K562 (cell line): ENCODE measurements at regions of chr14 and their contacts with region 1.

Region 1: GRCh38 chr14:55270832-55271565 is at the start of gene FBXO34:
- DNase-seq: peak; percentile 89 to 98 (median 90)
- ATAC-seq: peak; percentile 89
- H3K4me3 ChIP-seq: peak within 1 kb of the TSS; percentile 76
- H3K27ac ChIP-seq: peak within 1 kb of the TSS; percentile 96
- H3K4me1 ChIP-seq: peaks cover 8 to 16% of the 10 kb centered on the region in 2 experiments
- H3K27me3 ChIP-seq: no peaks in the 10 kb centered on the region
- CTCF ChIP-seq: peak; percentile 96 to 100 (median 99)
- EP300 ChIP-seq: peak; percentile 77
- POLR2A ChIP-seq: no peak; the same call in 1 of the 2 replicates
- RAD21 ChIP-seq: peak; percentile 78 to 81
- polyA plus RNA-seq, gene FBXO34: 6.3 to 10.8 TPM

Region 2: GRCh38 chr14:55333711-55334485 is 62.9 kb after region 1 on chr14:
- CTCF ChIA-PET with region 1: no interaction called
- POLR2A ChIA-PET with region 1: interaction called, 4 read pairs
- in situ Hi-C with region 1: no loop called
- intact Hi-C with region 1: loop called (anchors 2 kb)
- DNase-seq: no peak
- ATAC-seq: no peak
- H3K4me3 ChIP-seq: no peak overlapping the region
- H3K27ac ChIP-seq: no peak overlapping the region
- H3K4me1 ChIP-seq: peaks cover 0 to 7% of the 10 kb centered on the region in 2 experiments; a peak in 4 of 5 replicates
- H3K27me3 ChIP-seq: no peaks in the 10 kb centered on the region
- CTCF ChIP-seq: no peak
- EP300 ChIP-seq: no peak
- POLR2A ChIP-seq: no peak
- RAD21 ChIP-seq: no peak

Region 3: GRCh38 chr14:55354500-55354899 is 83.5 kb after region 1 on chr14:
- CTCF ChIA-PET with region 1: interaction called, 3 read pairs
- POLR2A ChIA-PET with region 1: no interaction called
- in situ Hi-C with region 1: no loop called
- intact Hi-C with region 1: loop called (anchors 2 kb)
- DNase-seq: peak in 3 of 4 experiments; percentile 13 to 56 (median 48)
- ATAC-seq: peak; percentile 93
- H3K4me3 ChIP-seq: no peak overlapping the region
- H3K27ac ChIP-seq: no peak overlapping the region
- H3K4me1 ChIP-seq: no peaks in the 10 kb centered on the region
- H3K27me3 ChIP-seq: no peaks in the 10 kb centered on the region
- CTCF ChIP-seq: peak; percentile 63 to 77 (median 64)
- EP300 ChIP-seq: no peak
- POLR2A ChIP-seq: no peak
- RAD21 ChIP-seq: peak; percentile 27 to 62; a peak in 3 of 4 replicates

Region 4: DNA sequence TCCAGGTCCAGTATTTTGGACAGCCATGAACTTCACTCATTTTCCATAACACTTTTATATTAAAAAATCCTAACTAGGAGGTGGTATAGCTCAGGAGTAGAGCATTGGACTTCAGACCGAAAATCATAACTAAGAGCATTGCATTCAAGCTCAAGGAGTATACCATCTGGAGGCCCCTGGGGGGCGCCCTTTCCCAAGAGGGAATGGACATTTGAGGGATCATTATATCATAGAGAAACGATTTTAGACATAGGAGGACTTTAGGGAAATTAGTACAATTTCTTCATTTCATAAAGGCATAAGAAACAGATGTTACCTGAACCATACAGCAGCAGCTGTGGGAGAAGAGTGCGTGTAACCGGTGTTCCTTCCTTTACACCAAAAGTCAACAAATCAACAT is 145.9 kb after region 1 on chr14:
- CTCF ChIA-PET with region 1: no interaction called
- POLR2A ChIA-PET with region 1: interaction called, 3 read pairs
- in situ Hi-C with region 1: no loop called
- intact Hi-C with region 1: loop called (anchors 5 kb)
- DNase-seq: peak; percentile 28 to 66 (median 32)
- ATAC-seq: peak; percentile 87
- H3K4me3 ChIP-seq: no peak overlapping the region
- H3K27ac ChIP-seq: no peak overlapping the region
- H3K4me1 ChIP-seq: peaks cover 3 to 20% of the 10 kb centered on the region in 2 experiments; a peak in 3 of 5 replicates
- H3K27me3 ChIP-seq: no peaks in the 10 kb centered on the region
- CTCF ChIP-seq: peak; percentile 53 to 62 (median 54)
- EP300 ChIP-seq: no peak
- POLR2A ChIP-seq: no peak
- RAD21 ChIP-seq: peak in 1 of 2 experiments; percentile 40; a peak in 2 of 4 replicates

Region 5: DNA sequence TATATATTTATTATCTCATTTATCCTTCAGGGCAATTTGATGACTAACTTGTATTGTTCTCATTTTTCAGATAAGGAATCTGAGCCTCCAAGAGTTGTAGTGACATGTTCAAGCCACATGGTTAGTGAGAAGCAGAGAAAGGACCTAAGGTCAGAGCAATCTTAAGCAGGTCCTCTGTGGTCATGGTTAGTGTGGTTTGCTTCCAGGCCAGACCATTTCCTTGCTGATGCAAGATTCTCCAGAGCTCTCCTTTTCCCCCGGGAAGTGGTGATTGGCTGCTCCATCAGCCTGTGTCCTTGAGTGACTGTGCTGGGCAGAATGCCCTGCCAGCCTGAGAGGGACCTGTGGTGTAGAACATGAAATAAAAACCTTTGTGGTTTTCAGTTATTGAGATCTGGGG is 450.4 kb after region 1 on chr14:
- CTCF ChIA-PET with region 1: no interaction called
- POLR2A ChIA-PET with region 1: no interaction called
- in situ Hi-C with region 1: no loop called
- intact Hi-C with region 1: no loop called
- DNase-seq: no peak
- ATAC-seq: no peak
- H3K4me3 ChIP-seq: no peak overlapping the region
- H3K27ac ChIP-seq: no peak overlapping the region
- H3K4me1 ChIP-seq: no peaks in the 10 kb centered on the region
- H3K27me3 ChIP-seq: peaks cover 0 to 7% of the 10 kb centered on the region in 2 experiments; a peak in 2 of 5 replicates
- CTCF ChIP-seq: no peak
- EP300 ChIP-seq: no peak
- POLR2A ChIP-seq: no peak
- RAD21 ChIP-seq: no peak